ENCODE measurements at regions of chr1 and their contacts with region 1.

Region 1: DNA sequence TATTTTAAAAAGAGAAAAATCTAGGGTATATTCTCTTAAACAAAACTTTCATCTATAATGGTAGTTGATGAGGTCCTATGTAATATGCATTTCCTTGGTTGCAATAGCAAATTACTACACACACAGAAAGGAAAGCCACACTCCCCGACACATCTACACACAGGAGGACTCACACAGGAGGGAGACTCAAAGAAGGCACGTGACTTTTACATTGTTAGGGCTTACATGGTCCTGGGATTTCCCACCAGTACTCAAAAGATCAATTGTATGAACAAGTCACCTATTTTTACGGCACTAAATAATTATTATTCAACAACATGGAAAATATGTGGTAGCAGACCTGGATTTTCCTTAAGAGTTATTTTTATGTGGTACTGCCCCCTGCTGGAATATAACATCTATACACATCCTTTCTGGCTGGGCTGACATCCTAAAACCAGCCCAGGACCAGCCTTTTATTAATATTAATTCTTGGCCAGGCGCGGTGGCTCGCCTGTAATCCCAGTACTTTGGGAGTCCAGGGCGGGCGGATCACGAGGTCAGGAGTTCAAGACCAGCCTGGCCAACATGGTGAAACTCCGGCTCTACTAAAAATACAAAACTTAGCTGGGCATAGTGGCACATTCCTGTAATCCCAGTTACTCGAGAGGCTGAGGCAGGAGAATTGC is 33.9 kb upstream of the LGALS8 start:
- DNase-seq: no peak
- H3K4me3 ChIP-seq: no peak overlapping the region
- H3K27ac ChIP-seq: no peak overlapping the region
- H3K4me1 ChIP-seq: peaks cover 1% of the 10 kb centered on the region
- H3K27me3 ChIP-seq: no peaks in the 10 kb centered on the region
- CTCF ChIP-seq: peak in 2 of 3 donors; percentile 22 to 37
- EP300 ChIP-seq: no peak
- POLR2A ChIP-seq: no peak

Region 2: DNA sequence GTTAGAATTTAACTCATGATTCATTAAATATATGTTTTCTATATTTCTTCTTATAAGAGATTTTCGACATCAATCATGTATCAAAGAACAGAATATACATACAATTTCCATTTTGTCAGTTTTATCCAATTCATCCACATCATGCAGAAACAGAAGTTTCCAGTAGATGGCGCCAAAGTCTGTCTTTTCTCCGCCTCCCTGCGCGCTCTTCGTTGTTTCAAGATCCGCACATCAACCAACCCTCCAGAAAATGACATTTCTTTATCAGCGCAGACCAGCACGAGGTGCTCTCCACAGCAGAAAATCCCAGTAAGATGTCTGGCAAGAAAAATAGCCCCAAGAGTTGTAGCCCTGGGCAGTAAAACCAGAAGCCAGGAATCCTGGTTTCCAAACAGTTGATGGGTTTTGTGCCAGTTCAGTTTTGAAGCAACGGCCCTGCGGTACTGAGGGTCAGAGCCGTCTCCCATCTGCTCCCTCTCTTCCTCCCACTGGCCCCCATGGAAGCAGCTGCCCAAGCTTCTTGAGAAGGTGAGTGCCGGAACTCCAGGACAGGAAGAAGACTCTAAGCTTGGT is 386.1 kb before region 1 on chr1:
- intact Hi-C with region 1: loop called in 1 of 4 experiments (anchors 5 kb)
- DNase-seq: peak; percentile 28 to 55 (median 50)
- H3K4me3 ChIP-seq: no peak overlapping the region
- H3K27ac ChIP-seq: no peak overlapping the region
- H3K4me1 ChIP-seq: no peaks in the 10 kb centered on the region
- H3K27me3 ChIP-seq: no peaks in the 10 kb centered on the region
- CTCF ChIP-seq: peak; percentile 61 to 69 (median 68)
- EP300 ChIP-seq: no peak
- POLR2A ChIP-seq: no peak

Region 3: DNA sequence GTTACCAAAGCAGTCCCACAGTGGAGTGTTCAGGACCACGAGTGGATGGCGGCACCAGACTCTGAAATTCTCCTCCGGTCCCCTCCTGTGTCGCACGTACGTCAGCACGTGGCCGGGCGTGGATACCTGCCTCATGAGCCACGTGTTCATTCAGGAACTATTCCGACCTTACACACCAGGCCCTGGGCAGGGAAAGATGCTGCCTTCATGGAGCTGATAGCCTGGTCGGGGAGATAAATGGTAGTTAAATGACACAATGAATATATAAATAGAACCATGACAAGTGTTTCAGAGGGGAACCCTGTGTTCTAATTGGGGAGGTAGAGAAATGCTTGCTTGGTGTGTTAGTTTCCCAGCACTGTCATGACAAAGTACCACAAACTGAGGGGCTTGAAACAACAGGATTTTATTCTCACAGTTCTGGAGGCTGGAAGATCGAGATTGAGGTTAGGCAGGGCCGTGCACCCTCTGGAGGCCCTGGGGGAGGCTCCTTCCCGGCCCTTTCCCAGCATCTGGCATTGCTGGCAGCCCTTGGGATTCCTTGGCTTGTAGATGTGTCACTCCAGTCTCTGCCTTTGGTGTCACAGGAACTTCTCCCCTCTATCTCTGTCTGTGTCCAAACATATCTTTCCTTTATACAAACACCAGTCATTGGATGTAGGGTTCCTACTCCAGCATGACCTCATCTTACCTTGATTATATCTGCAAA is 376.4 kb before region 1 on chr1:
- intact Hi-C with region 1: loop called in 2 of 4 experiments (anchors 2 to 10 kb)
- DNase-seq: no peak
- H3K4me3 ChIP-seq: no peak overlapping the region
- H3K27ac ChIP-seq: no peak overlapping the region
- H3K4me1 ChIP-seq: no peaks in the 10 kb centered on the region
- H3K27me3 ChIP-seq: no peaks in the 10 kb centered on the region
- CTCF ChIP-seq: no peak
- EP300 ChIP-seq: no peak
- POLR2A ChIP-seq: no peak

Region 4: GRCh38 chr1:236821091-236821627 is 331.3 kb after region 1 on chr1:
- intact Hi-C with region 1: loop called in 1 of 4 experiments (anchors 10 kb)
- DNase-seq: no peak
- H3K4me3 ChIP-seq: no peak overlapping the region
- H3K27ac ChIP-seq: no peak overlapping the region
- H3K4me1 ChIP-seq: no peaks in the 10 kb centered on the region
- H3K27me3 ChIP-seq: no peaks in the 10 kb centered on the region
- CTCF ChIP-seq: no peak
- EP300 ChIP-seq: no peak
- POLR2A ChIP-seq: no peak

Measured in ovary (tissue), 10 donors.